ENCODE measurements at regions of chr3 and their contacts with region 1.

Region 1: DNA sequence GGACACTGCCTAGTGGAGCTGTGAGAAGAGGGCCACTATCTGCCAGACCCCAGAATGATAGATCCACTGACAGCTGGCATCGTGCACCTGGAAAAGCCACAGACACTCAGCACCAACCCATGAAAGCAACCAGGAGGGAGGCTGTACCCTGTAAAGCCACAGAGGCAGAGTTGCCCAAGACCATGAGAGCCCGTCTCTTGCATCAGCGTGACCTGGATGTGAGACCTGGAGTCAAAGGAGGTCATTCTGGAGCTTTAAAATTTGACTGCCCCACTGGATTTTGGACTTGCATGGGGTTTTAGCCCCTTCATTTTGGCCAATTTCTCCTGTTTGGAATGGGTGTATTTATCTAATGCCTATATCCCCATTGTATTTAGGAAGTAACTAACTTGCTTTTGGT is 83.5 kb upstream of the P3H2 start:
- DNase-seq: no peak
- CTCF ChIP-seq: no peak

Region 2: GRCh38 chr3:189967254-189967865 is 236.8 kb before region 1 on chr3:
- in situ Hi-C with region 1: loop called (anchors 5 kb)
- DNase-seq: peak; percentile 62
- CTCF ChIP-seq: peak; percentile 74